Ascending aorta (tissue), 2 donors: ENCODE measurements at regions of chr4 and their contacts with region 1.

Region 1: DNA sequence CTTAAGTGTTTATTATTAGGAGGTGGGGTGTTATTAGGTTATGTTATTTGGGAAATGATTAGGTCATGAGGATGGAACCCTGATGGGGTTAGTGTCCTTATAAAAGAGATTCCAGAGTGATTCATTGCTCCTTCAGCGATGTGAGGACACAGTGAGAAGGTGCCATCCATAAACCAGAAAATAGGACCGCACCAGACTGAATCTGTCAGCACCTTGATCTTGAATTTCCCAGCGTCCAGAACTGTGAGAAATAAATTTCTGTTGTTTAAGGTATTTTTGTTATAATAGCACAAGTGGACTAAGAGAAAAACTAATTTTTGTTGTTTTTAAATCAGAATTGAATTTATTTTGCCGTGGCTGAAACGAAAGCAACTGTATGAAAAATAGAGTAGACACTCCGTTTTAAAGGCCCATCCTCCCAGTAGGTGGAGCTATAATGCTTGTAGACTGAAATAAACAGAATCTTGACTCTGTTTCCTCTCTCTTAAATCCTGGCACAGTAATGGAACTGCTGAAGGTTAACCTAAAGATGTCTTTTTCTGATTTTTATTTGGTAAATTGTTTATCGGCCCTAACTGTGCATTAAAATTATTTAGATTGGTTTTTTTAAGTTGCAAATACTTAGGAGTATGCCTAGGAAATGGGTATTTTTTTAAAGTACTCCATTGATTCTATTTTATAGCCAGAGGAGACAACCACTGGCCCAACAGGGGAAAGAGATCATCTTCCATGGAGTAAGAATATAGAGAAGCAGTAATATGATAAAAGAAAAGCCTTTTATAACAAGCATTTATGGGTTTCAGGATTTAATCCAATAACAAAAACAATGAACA is 133.2 kb upstream of the ADAMTS3 start:
- DNase-seq: no peak
- H3K4me3 ChIP-seq: peak overlapping the region; percentile 49 to 59
- H3K27ac ChIP-seq: no peak overlapping the region
- H3K4me1 ChIP-seq: no peaks in the 10 kb centered on the region
- H3K27me3 ChIP-seq: no peaks in the 10 kb centered on the region
- CTCF ChIP-seq: peak; percentile 35 to 71 (median 67)

Region 2: DNA sequence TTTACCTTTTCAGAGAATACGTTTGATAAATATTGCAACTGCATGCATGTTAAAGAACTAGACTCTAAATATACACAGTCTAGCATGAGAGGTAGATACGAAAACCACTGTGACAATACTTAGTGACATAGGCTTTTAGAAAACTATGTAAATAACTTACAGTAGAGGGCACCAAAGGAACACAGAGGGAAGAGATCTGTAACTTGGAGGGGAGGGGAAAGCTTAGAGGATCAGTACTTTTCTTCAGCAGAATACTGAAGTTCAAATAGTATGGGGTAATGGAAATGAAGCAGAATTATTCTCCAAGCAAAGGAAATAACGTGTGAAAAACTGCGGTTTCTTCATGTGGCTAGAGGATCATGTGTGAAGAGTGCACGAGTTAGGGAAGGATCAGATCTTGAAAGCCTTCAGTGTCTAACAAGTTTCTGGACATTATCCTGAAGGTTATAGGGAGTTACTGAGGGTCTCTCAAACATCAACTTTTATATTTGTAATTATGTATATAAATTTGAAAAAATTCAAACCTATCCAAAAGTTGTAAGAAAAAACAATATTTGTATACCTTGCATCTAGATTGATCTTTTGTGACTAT is 406.1 kb before region 1 on chr4:
- intact Hi-C with region 1: loop called (anchors 5 kb)
- DNase-seq: no peak
- H3K4me3 ChIP-seq: no peak overlapping the region
- H3K27ac ChIP-seq: no peak overlapping the region
- H3K4me1 ChIP-seq: no peaks in the 10 kb centered on the region
- H3K27me3 ChIP-seq: no peaks in the 10 kb centered on the region
- CTCF ChIP-seq: peak in 2 of 3 experiments; percentile 69 to 76

Region 3: GRCh38 chr4:72767618-72768302 is 65.6 kb after region 1 on chr4:
- intact Hi-C with region 1: loop called (anchors 5 kb)
- DNase-seq: no peak
- H3K4me3 ChIP-seq: peak overlapping the region in 1 of 2 donors; percentile 52
- H3K27ac ChIP-seq: peak overlapping the region; percentile 62 to 84
- H3K4me1 ChIP-seq: no peaks in the 10 kb centered on the region
- H3K27me3 ChIP-seq: no peaks in the 10 kb centered on the region
- CTCF ChIP-seq: no peak

Region 4: GRCh38 chr4:72909461-72909860 is 207.3 kb after region 1 on chr4:
- intact Hi-C with region 1: loop called (anchors 1 kb)
- DNase-seq: no peak
- H3K4me3 ChIP-seq: no peak overlapping the region
- H3K27ac ChIP-seq: no peak overlapping the region
- H3K4me1 ChIP-seq: no peaks in the 10 kb centered on the region
- H3K27me3 ChIP-seq: no peaks in the 10 kb centered on the region
- CTCF ChIP-seq: peak in 2 of 3 experiments; percentile 19 to 43